WTC11 (cell line): ENCODE measurements at regions of chr6 and their contacts with region 1.

Region 1: DNA sequence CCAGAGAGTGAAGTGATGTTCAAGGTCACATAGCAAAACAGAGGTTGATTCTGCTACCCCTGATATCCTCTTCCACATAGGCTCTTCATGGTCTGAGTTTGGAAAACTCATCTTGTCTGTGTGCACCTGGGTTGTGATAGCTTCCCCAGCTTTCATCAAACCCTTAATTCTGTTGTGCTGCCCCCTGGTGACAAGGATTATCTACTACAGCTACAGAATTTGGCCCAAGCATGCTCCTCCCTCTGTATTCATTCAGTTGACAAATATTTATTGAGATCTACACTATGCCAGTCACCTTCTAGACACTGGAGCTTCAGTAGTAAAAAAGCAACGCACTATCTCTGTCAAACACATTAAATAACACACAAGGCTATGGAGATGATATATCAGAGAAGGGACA is 50.4 kb downstream of the SMPDL3A start:
- DNase-seq: peak; percentile 71
- ATAC-seq: peak; percentile 94
- H3K4me3 Mint-ChIP-seq: no peak overlapping the region
- H3K27ac Mint-ChIP-seq: no peak overlapping the region
- H3K4me1 Mint-ChIP-seq: peaks cover 22% of the 10 kb centered on the region
- H3K27me3 Mint-ChIP-seq: peaks cover 10% of the 10 kb centered on the region; the same call in 1 of the 2 replicates
- CTCF ChIP-seq: peak; percentile 60

Region 2: GRCh38 chr6:122657601-122658000 is 181.9 kb before region 1 on chr6:
- CTCF ChIA-PET with region 1: no interaction called
- POLR2A ChIA-PET with region 1: no interaction called
- DNase-seq: no peak
- ATAC-seq: no peak
- H3K4me3 Mint-ChIP-seq: no peak overlapping the region
- H3K27ac Mint-ChIP-seq: no peak overlapping the region
- H3K4me1 Mint-ChIP-seq: no peaks in the 10 kb centered on the region
- H3K27me3 Mint-ChIP-seq: no peaks in the 10 kb centered on the region
- CTCF ChIP-seq: no peak

Region 3: DNA sequence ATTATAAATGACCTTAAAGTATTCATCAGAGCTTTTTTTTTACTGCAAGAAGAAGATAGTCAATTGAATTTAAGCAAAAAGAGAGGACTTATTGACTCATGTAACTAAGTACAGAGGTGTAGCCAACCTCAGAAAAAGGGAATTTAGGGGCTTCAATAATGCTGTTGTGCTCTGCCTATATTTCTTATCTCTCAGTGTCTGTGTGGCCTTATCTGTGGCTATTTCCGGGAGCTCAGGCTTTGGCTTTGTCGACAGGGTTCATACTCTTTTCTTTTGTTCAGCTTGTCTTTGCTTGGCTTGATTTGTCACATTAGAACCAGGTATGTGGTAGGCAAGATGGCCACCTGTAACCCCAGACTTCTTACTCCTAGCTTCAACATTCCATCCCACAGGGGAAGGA is 98.5 kb before region 1 on chr6:
- CTCF ChIA-PET with region 1: interaction called, 47 read pairs
- POLR2A ChIA-PET with region 1: interaction called, 4 read pairs
- DNase-seq: no peak
- ATAC-seq: no peak
- H3K4me3 Mint-ChIP-seq: no peak overlapping the region
- H3K27ac Mint-ChIP-seq: no peak overlapping the region
- H3K4me1 Mint-ChIP-seq: peaks cover 6% of the 10 kb centered on the region
- H3K27me3 Mint-ChIP-seq: peaks cover 16% of the 10 kb centered on the region
- CTCF ChIP-seq: no peak

Region 4: GRCh38 chr6:122758927-122759334 is 80.5 kb before region 1 on chr6:
- CTCF ChIA-PET with region 1: no interaction called
- POLR2A ChIA-PET with region 1: no interaction called
- DNase-seq: no peak
- ATAC-seq: no peak
- H3K4me3 Mint-ChIP-seq: no peak overlapping the region
- H3K27ac Mint-ChIP-seq: no peak overlapping the region
- H3K4me1 Mint-ChIP-seq: peaks cover 21% of the 10 kb centered on the region
- H3K27me3 Mint-ChIP-seq: peaks cover 64% of the 10 kb centered on the region
- CTCF ChIP-seq: no peak

Region 5: GRCh38 chr6:122770835-122771601 is 68.5 kb before region 1 on chr6:
- CTCF ChIA-PET with region 1: interaction called, 17 read pairs
- POLR2A ChIA-PET with region 1: no interaction called
- DNase-seq: no peak
- ATAC-seq: peak; percentile 75
- H3K4me3 Mint-ChIP-seq: no peak overlapping the region
- H3K27ac Mint-ChIP-seq: no peak overlapping the region
- H3K4me1 Mint-ChIP-seq: peaks cover 6% of the 10 kb centered on the region
- H3K27me3 Mint-ChIP-seq: peaks cover 56% of the 10 kb centered on the region
- CTCF ChIP-seq: no peak

Region 6: DNA sequence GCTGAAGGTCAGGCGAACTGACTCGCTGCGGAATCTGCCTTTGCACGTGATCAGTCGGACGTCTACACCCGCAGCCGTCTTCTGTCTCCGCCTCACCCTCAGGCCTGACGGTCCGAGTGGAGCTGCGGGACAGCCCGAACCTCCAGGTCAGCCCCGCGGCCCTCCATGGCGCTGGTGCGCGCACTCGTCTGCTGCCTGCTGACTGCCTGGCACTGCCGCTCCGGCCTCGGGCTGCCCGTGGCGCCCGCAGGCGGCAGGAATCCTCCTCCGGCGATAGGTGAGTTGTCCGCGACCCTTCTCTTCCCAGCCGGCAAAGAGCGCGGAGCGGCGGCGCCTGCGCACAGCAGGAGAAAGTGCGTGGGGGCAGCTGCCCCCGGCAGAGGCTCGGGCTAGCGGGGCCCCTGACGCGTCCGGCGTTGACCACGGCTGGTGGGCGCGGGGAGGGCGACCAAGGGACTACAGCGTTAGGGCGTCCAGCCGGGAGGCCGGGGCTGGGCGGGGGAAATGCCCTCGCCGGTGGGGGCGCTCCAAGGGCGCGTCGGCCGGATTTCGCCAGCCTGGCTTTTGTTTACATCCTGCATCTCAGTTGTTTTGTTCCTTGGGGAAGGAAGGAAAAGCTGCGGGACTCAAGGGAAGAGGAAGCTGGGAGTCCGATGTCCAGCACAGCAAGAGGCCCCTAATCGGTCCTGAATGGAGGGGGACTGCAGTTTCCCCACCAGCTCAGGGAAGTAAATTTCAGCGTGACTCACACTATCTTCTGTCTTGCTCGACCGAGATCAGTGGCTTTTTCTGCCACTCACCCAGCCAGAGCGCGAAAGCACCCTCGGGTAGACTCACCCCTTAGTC is 50.1 kb before region 1 on chr6 and contains the start of gene SMPDL3A:
- CTCF ChIA-PET with region 1: interaction called, 17 read pairs
- POLR2A ChIA-PET with region 1: interaction called, 5 read pairs
- DNase-seq: peak; percentile 81
- ATAC-seq: peak; percentile 81
- H3K4me3 Mint-ChIP-seq: peak within 1 kb of the TSS; percentile 75
- H3K27ac Mint-ChIP-seq: peak within 1 kb of the TSS; percentile 98
- H3K4me1 Mint-ChIP-seq: peaks cover 59% of the 10 kb centered on the region
- H3K27me3 Mint-ChIP-seq: peaks cover 52% of the 10 kb centered on the region
- CTCF ChIP-seq: no peak
- total RNA-seq, gene SMPDL3A: 2.0 to 2.8 TPM (median 2.1 TPM) in 3 replicates

Region 7: GRCh38 chr6:123306334-123306733 is 466.9 kb after region 1 on chr6:
- CTCF ChIA-PET with region 1: no interaction called
- POLR2A ChIA-PET with region 1: no interaction called
- DNase-seq: no peak
- ATAC-seq: no peak
- H3K4me3 Mint-ChIP-seq: no peak overlapping the region
- H3K27ac Mint-ChIP-seq: no peak overlapping the region
- H3K4me1 Mint-ChIP-seq: no peaks in the 10 kb centered on the region
- H3K27me3 Mint-ChIP-seq: no peaks in the 10 kb centered on the region
- CTCF ChIP-seq: no peak